ENCODE measurements at regions of chr21 and their contacts with region 1.

Region 1: DNA sequence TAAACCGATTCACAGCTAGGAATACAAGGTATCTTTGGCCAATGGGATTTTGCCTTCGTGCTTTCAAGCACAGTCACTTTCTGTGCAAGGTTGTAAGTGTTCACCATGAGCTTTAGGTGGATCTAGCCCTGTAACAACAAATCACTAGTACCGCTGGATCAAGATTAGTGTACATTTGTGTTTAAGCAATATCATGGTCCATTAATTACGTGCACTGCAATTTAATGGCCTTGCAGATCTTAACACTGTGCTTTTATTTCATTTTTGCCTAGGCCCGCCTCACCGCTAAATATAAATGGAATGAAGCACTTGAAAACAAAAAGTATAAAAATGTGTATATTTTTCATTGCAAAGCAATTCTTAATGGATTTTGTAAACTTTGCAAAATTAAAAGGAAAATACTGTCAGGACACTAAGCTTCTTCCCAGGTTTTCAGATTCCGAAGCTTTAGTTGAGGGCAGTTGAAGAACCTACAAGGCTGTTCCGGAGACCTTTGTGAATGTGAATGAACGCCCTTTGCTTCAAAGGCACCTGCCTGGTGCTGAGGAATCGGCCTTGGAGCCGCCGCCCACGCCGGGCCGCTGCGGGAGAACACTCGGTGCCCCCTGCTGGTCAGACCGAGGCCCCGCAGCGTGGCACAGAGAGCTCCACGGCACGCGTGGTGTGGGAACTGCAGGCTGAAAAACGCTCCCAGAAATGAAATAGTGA is 460.9 kb downstream of the DSCAM start:
- DNase-seq: no peak
- H3K4me3 Mint-ChIP-seq: no peak overlapping the region
- H3K27ac Mint-ChIP-seq: no peak overlapping the region
- H3K4me1 Mint-ChIP-seq: no peaks in the 10 kb centered on the region
- H3K27me3 Mint-ChIP-seq: no peaks in the 10 kb centered on the region

Region 2: DNA sequence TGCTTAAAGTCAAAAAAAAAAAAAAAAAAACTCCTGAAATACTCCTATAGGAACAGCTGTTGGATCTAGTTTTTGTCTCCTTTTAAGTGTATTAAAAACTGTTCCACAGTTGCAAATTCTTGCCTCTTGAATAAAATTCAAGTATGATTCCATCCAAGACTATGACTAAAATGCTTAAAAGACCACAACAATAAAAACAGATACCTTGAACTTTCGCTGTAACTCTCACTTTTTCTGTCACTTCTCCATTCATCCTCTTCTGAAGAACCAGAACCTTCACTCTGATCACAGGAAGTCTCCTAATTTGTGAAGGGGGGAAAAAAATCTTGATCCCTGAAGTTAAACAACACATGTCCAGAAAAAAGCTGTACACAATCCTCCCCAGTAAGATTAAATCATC is 1147.8 kb before region 1 on chr21:
- intact Hi-C with region 1: no loop called
- DNase-seq: no peak
- H3K4me3 Mint-ChIP-seq: no peak overlapping the region
- H3K27ac Mint-ChIP-seq: no peak overlapping the region
- H3K4me1 Mint-ChIP-seq: peaks cover 5% of the 10 kb centered on the region
- H3K27me3 Mint-ChIP-seq: no peaks in the 10 kb centered on the region

Region 3: DNA sequence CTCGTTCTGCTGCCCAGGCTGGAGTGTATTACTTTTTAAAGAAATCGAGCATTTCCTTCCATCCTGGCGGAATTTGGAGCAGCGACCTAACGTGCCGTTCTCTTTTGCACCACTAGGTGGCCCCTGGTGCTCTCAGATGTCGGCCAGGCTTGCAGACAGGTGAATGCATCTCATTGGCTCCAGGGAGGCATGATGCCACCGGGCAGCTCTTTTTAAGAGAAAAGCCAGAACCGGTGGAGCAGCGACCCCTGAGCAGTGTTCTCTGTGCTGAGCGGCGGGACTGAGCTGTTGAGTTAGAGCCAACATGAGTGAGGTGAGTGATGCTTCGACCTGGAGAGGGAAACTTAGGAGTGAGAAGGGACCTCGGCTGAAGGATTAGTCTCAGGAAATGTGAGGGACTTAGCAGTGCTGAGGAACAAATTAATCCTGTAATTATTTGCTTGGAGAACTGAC is 518.8 kb before region 1 on chr21 and contains the start of gene PCP4:
- intact Hi-C with region 1: loop called (anchors 5 kb)
- DNase-seq: peak; percentile 3
- H3K4me3 Mint-ChIP-seq: no peak within 1 kb of the TSS
- H3K27ac Mint-ChIP-seq: no peak within 1 kb of the TSS
- H3K4me1 Mint-ChIP-seq: no peaks in the 10 kb centered on the region
- H3K27me3 Mint-ChIP-seq: peaks cover 4% of the 10 kb centered on the region
- total RNA-seq, gene PCP4: not detected in 2 replicates

Region 4: DNA sequence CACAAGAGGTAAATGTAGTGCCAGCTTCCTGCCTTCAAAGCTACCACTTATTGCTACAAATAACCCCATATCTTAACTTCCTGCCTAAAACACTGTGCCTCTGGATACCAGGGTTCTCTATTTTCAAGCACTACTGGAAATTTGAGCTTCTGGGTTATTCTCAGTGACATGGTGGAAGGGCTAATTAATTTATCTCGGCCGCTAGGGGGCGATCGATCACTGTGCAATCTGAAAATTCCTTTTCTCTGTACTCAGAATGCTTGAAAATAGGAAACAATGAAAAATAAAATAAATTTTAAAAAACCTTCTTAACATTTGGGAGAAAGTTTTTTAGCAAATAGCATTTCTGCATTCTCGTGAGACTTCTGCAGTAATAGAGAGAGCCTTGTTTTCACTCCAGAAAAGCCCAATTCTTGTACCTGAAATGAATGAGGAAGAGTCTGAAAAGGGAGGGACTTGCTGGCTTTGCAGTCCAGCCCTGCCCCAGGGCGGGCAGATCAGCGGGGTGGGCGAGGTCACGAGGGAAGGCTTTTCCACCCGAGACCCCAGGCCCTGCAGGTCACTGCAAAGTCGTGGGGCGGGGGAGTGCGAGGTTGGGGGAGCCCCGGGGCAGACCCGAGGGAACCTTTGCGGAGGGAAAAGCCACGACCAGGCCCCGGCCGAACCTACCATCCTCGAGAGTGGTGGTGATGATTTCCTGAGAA is 242.1 kb before region 1 on chr21:
- intact Hi-C with region 1: loop called (anchors 2 kb)
- DNase-seq: no peak
- H3K4me3 Mint-ChIP-seq: no peak overlapping the region
- H3K27ac Mint-ChIP-seq: no peak overlapping the region
- H3K4me1 Mint-ChIP-seq: no peaks in the 10 kb centered on the region
- H3K27me3 Mint-ChIP-seq: no peaks in the 10 kb centered on the region

Measured in activated T-helper 1 cell treated with anti-CD3 and anti-CD28 coated beads, Interleukin-12 subunit alpha, Interleukin-12 subunit beta, Interleukin-2, Interleukin-4 antibody, amounts not matched to agents 30 ng/mL and 10 ng/mL and 1 ng/mL, durations not matched to agents 14 hours and 24 hours and 36 hours (primary cell).